ENCODE measurements at regions of chr1 and their contacts with region 1.

Region 1: DNA sequence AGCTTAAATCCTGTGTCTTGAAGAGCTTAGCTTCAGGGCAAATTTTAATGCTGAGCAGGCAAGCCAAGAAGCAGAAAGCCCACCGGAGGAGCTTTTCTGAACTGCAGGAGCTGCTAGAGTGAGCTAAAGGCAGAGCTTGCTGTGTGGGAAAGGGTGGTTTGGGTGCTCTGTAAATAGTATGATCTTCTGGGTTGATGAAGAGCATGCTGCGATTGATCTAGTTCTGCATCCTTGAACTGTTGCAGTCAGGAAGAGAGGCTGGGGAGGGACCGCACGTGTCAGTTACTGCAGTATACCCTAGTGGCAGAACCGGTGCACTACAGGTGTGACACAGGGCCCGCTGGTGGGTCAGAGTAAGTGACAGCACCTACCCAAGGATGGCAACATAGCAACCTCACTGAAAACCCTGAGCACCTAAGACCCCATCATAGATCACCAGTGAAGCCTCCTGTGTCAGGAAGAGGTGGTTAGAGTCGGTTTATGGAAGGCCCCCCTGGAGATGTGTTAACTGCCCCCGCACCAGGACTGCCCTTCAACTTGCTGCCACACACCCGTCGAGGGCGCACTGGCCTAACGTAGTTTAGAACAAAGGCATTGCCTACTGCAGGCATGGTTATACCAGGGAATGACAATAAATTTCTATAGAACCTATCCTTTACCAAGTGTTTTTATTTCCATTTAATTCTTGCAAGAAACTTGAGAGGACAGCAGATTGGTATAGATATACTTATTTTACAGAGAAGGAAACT is 146.0 kb upstream of the KIAA0040 start:
- DNase-seq: peak; percentile 31 to 71 (median 57)
- ATAC-seq: peak; percentile 98
- H3K4me3 ChIP-seq: no peak overlapping the region
- H3K4me3 Mint-ChIP-seq: no peak overlapping the region
- H3K27ac ChIP-seq: no peak overlapping the region
- H3K27ac Mint-ChIP-seq: no peak overlapping the region
- H3K4me1 ChIP-seq: no peaks in the 10 kb centered on the region
- H3K4me1 Mint-ChIP-seq: peaks cover 5% of the 10 kb centered on the region
- H3K27me3 ChIP-seq: no peaks in the 10 kb centered on the region
- H3K27me3 Mint-ChIP-seq: peaks cover 21% of the 10 kb centered on the region
- CTCF ChIP-seq: peak; percentile 58

Region 2: GRCh38 chr1:175146529-175147213 is 191.9 kb before region 1 on chr1:
- CTCF ChIA-PET with region 1: interaction called, 22 read pairs
- POLR2A ChIA-PET with region 1: no interaction called
- intact Hi-C with region 1: no loop called
- DNase-seq: peak; percentile 48 to 75 (median 67)
- ATAC-seq: peak; percentile 87
- H3K4me3 ChIP-seq: no peak overlapping the region
- H3K4me3 Mint-ChIP-seq: no peak overlapping the region
- H3K27ac ChIP-seq: no peak overlapping the region
- H3K27ac Mint-ChIP-seq: no peak overlapping the region
- H3K4me1 ChIP-seq: peaks cover 2% of the 10 kb centered on the region
- H3K4me1 Mint-ChIP-seq: peaks cover 3% of the 10 kb centered on the region
- H3K27me3 ChIP-seq: peaks cover 0 to under 1% of the 10 kb centered on the region in 2 experiments
- H3K27me3 Mint-ChIP-seq: peaks cover 28% of the 10 kb centered on the region
- CTCF ChIP-seq: peak; percentile 88

Region 3: DNA sequence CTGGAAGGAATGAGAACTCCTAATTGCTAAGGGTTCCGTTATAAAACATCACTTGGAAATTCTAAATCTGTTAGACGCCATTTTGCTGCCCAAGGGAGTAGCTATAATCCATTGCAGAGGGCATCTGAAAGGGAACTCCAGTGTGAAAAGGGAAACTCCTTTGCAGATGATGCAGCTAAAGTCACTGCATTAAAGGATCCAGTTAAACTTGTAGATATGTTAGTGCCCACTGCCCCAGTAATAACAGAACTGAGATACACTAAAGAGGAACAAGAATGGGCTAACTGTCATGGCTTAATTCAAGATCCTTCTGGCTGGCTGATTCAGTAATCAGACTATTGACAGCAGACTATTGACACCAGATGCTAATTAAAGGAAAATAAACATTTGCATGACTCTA is 64.2 kb before region 1 on chr1:
- CTCF ChIA-PET with region 1: no interaction called
- POLR2A ChIA-PET with region 1: no interaction called
- intact Hi-C with region 1: no loop called
- DNase-seq: no peak
- ATAC-seq: no peak
- H3K4me3 ChIP-seq: no peak overlapping the region
- H3K4me3 Mint-ChIP-seq: no peak overlapping the region
- H3K27ac ChIP-seq: no peak overlapping the region
- H3K27ac Mint-ChIP-seq: no peak overlapping the region
- H3K4me1 ChIP-seq: no peaks in the 10 kb centered on the region
- H3K4me1 Mint-ChIP-seq: no peaks in the 10 kb centered on the region
- H3K27me3 ChIP-seq: no peaks in the 10 kb centered on the region
- H3K27me3 Mint-ChIP-seq: peaks cover under 1% of the 10 kb centered on the region
- CTCF ChIP-seq: no peak

Region 4: GRCh38 chr1:175353066-175353465 is 14.5 kb after region 1 on chr1:
- CTCF ChIA-PET with region 1: no interaction called
- POLR2A ChIA-PET with region 1: no interaction called
- intact Hi-C with region 1: no loop called
- DNase-seq: no peak
- ATAC-seq: no peak
- H3K4me3 ChIP-seq: no peak overlapping the region
- H3K4me3 Mint-ChIP-seq: no peak overlapping the region
- H3K27ac ChIP-seq: no peak overlapping the region
- H3K27ac Mint-ChIP-seq: no peak overlapping the region
- H3K4me1 ChIP-seq: no peaks in the 10 kb centered on the region
- H3K4me1 Mint-ChIP-seq: no peaks in the 10 kb centered on the region
- H3K27me3 ChIP-seq: no peaks in the 10 kb centered on the region
- H3K27me3 Mint-ChIP-seq: peaks cover 4% of the 10 kb centered on the region
- CTCF ChIP-seq: no peak